B cell (primary cell): ENCODE measurements at regions of chr19 and their contacts with region 1.

Region 1: DNA sequence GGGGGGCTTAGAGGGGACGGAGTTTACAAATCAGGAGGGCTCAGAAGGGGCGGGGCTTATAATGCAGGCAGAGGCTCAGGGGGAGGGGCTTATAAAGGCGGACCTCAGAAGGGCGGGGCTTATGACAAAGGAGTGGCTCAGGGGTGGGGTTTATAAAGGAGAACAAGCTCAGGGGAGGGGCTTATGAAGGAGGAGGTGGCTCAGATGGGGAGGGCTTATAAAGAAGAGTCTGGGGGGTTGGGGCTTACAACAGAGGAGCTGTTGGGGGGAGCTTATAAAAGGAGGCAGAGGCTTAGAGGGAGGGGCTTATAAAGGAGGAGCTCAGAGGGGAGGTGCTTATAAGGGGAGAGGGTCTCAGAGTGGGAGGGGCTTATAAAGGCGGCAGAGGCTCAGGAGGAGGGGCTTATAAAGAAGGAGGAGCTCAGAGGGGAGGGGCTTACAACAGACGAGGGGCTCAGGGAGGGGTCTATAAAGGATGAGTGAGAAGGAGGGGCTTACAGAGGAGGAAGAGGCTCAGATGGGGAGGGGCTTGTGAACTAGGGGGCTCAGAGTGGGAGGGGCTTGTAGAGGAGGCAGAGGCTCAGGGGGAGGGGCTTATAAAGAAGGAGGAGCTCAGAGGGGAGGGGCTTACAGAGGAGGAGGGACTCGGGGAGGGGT is 1.0 kb downstream of the SMIM24 start:
- DNase-seq: peak; percentile 80
- ATAC-seq: peak; percentile 85
- H3K4me3 ChIP-seq: peak overlapping the region in 3 of 5 experiments; percentile 33 to 35 (median 34)
- H3K4me3 Mint-ChIP-seq: no peak overlapping the region
- H3K27ac ChIP-seq: no peak overlapping the region
- H3K27ac Mint-ChIP-seq: no peak overlapping the region
- H3K4me1 ChIP-seq: peaks cover 17 to 31% of the 10 kb centered on the region in 2 donors
- H3K4me1 Mint-ChIP-seq: peaks cover 18% of the 10 kb centered on the region
- H3K27me3 ChIP-seq: peaks cover 0 to 10% (median 0%) of the 10 kb centered on the region in 4 experiments
- H3K27me3 Mint-ChIP-seq: peaks cover 5% of the 10 kb centered on the region
- CTCF ChIP-seq: no peak

Region 2: GRCh38 chr19:2933490-2933910 is 545.8 kb before region 1 on chr19:
- CTCF ChIA-PET with region 1: no interaction called
- POLR2A ChIA-PET with region 1: interaction called, 10 read pairs
- intact Hi-C with region 1: no loop called
- DNase-seq: no peak
- ATAC-seq: no peak
- H3K4me3 ChIP-seq: no peak overlapping the region
- H3K4me3 Mint-ChIP-seq: no peak overlapping the region
- H3K27ac ChIP-seq: no peak overlapping the region
- H3K27ac Mint-ChIP-seq: no peak overlapping the region
- H3K4me1 ChIP-seq: no peaks in the 10 kb centered on the region
- H3K4me1 Mint-ChIP-seq: no peaks in the 10 kb centered on the region
- H3K27me3 ChIP-seq: no peaks in the 10 kb centered on the region
- H3K27me3 Mint-ChIP-seq: no peaks in the 10 kb centered on the region
- CTCF ChIP-seq: no peak

Region 3: GRCh38 chr19:3403489-3404323 is 75.6 kb before region 1 on chr19:
- CTCF ChIA-PET with region 1: no interaction called
- POLR2A ChIA-PET with region 1: no interaction called
- intact Hi-C with region 1: no loop called
- DNase-seq: no peak
- ATAC-seq: no peak
- H3K4me3 ChIP-seq: no peak overlapping the region
- H3K4me3 Mint-ChIP-seq: no peak overlapping the region
- H3K27ac ChIP-seq: no peak overlapping the region
- H3K27ac Mint-ChIP-seq: no peak overlapping the region
- H3K4me1 ChIP-seq: no peaks in the 10 kb centered on the region
- H3K4me1 Mint-ChIP-seq: no peaks in the 10 kb centered on the region
- H3K27me3 ChIP-seq: no peaks in the 10 kb centered on the region
- H3K27me3 Mint-ChIP-seq: no peaks in the 10 kb centered on the region
- CTCF ChIP-seq: no peak

Region 4: GRCh38 chr19:3499738-3500428 is 20.6 kb after region 1 on chr19:
- CTCF ChIA-PET with region 1: no interaction called
- POLR2A ChIA-PET with region 1: no interaction called
- intact Hi-C with region 1: no loop called
- DNase-seq: peak; percentile 42
- ATAC-seq: no peak
- H3K4me3 ChIP-seq: peak overlapping the region; percentile 84 to 95 (median 89)
- H3K4me3 Mint-ChIP-seq: peak overlapping the region; percentile 93
- H3K27ac ChIP-seq: peak overlapping the region; percentile 93 to 96
- H3K27ac Mint-ChIP-seq: peak overlapping the region; percentile 95
- H3K4me1 ChIP-seq: peaks cover 10 to 15% of the 10 kb centered on the region in 2 donors
- H3K4me1 Mint-ChIP-seq: peaks cover 22% of the 10 kb centered on the region
- H3K27me3 ChIP-seq: no peaks in the 10 kb centered on the region
- H3K27me3 Mint-ChIP-seq: no peaks in the 10 kb centered on the region
- CTCF ChIP-seq: no peak

Region 5: DNA sequence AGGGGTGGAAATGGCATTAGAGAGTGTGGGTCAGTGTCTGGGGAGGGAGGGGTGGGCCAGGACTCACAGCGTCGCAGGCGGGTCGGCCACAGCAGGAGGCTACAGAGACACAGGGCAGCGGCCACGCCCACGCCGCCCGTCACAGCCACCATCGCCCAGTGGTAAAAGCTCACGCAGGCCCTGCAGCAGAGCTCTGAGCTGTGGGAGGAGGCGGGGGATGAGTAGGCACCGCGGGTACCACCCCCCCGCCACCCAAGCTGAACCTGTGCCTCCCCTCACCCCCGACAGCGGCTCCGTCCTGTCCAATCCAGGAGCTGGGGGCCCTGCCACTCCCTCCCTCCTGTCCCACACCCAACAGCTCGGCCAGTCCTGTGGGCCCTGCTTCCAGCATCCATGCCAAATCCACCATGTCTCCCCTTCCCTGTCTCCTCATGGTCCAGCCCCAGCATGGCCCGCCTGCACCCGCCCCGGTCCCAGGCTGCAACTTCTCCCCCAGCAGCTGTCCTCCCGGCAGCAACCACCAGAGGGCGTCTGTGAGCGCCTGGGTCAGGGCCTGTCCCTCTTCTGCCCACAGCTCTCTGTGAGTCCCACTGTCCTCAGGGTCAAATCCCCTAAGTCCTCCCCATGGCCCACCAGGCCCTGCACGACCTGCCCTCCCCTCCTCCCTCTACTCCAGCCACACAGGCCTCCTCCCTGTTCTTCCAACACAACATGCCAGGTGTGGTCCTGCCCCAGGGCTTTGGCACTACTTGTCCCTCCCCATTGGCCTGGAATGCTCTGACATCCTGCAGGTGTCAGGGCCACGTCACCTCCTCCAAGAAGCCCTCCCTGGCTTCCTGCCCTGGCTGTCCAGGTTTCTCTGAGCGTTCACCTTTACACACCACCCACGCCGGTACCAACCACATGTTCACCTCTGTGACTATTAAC is 65.7 kb after region 1 on chr19:
- CTCF ChIA-PET with region 1: no interaction called
- POLR2A ChIA-PET with region 1: no interaction called
- intact Hi-C with region 1: no loop called
- DNase-seq: peak; percentile 78
- ATAC-seq: peak; percentile 78
- H3K4me3 ChIP-seq: no peak overlapping the region
- H3K4me3 Mint-ChIP-seq: no peak overlapping the region
- H3K27ac ChIP-seq: no peak overlapping the region
- H3K27ac Mint-ChIP-seq: peak overlapping the region; percentile 86
- H3K4me1 ChIP-seq: no peaks in the 10 kb centered on the region
- H3K4me1 Mint-ChIP-seq: peaks cover 8% of the 10 kb centered on the region
- H3K27me3 ChIP-seq: no peaks in the 10 kb centered on the region
- H3K27me3 Mint-ChIP-seq: no peaks in the 10 kb centered on the region
- CTCF ChIP-seq: peak; percentile 90